ENCODE measurements at regions of chr1 and their contacts with region 1.

Region 1: DNA sequence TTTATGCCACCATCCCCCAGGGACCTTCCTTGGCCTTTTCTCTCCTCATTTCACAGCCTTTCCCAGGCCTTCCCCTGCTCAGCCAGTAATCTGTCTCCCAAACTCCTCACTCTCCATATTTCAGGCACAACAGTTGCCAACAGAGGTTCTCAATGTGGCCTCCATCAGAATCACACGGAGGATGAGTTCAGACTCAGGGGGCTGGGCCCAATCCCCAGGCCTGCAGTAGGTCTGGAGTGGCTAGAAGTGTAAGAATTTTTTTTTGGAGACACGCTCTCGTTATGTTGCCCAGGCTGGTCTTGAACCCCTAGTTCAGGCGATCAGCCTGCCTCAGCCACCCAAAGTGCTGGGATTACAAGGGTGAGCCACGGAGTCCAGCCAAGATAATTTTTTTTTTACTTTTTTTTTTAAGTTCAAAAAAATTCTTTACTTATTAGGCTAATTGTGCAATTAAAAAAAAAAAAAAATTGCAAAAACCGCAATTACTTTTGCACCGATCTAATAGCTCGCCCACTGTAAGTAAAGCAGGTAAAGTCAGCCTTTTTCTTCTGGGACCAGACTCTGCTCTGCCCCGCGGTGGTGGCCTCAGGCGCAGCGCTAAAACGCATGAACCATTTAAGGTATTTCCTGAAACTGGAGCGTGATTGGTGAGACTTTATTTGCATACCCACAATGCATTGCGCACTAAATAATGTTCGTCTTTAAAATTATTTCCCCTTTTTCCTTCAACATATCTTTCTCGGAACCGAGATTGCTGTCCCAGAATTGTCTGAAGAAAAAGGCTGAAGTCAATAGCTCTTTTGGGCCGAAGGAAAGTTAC is 18.7 kb downstream of the KIAA2013 start:
- DNase-seq: peak; percentile 87 to 97
- H3K4me3 ChIP-seq: peak overlapping the region in 1 of 2 donors; percentile 69
- H3K27ac ChIP-seq: peak overlapping the region; percentile 85 to 92
- H3K4me1 ChIP-seq: no peaks in the 10 kb centered on the region
- H3K27me3 ChIP-seq: no peaks in the 10 kb centered on the region
- CTCF ChIP-seq: peak; percentile 88 to 95 (median 94)

Region 2: GRCh38 chr1:11735854-11736745 is 171.4 kb before region 1 on chr1 and contains the start of gene AGTRAP:
- intact Hi-C with region 1: loop called (anchors 5 kb)
- DNase-seq: peak; percentile 81 to 97
- H3K4me3 ChIP-seq: peak within 1 kb of the TSS; percentile 72 to 83
- H3K27ac ChIP-seq: peak within 1 kb of the TSS; percentile 73 to 90
- H3K4me1 ChIP-seq: peaks cover 3 to 18% of the 10 kb centered on the region in 2 donors
- H3K27me3 ChIP-seq: no peaks in the 10 kb centered on the region
- CTCF ChIP-seq: no peak
- total RNA-seq, gene AGTRAP: 95.6 TPM

Region 3: DNA sequence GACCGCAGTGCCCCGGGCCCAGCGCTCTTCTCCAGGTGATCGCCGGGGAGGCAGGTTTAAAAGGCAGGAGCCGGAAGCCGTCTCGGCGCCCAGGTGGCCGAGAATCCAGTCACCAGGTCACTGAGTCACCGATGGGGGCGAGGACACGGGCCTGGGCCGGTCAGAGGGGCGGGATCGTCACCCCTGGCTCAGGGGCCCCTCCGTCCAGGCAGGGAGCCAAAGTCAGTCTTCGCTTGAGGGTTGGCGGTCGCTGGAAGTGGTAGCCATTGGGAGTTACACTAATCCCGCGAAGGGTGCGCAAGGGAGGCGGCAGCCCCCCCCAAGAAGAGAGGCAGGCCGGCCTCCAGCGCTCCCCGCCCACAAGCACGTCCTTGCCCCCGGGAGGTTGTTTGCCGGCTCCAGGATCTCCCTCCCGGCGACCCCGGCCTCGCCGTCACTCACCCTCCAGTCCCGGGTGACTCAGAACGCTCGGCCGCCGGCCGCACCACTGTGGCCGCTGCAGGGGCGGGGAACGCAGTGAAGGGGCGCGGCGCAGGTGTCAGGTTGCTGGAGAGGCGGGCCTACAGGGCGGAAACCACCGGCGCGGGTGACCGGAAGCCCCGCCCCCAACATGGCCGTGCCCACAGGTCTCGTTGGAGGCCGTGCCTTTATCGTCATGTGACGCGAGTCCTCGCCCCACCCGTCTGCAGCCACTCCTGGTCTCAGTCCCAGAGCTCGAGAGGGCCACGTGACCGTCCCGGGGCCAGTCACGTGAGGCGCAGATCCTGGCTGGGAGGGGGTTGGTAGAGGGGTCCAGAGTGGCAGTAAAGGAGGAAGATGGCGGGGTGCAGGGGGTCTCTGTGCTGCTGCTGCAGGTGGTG is 101.8 kb before region 1 on chr1 and contains the starts of genes CLCN6 and MTHFR:
- intact Hi-C with region 1: loop called (anchors 1 kb)
- DNase-seq: peak; percentile 98 to 99
- H3K4me3 ChIP-seq: peak within 1 kb of the TSS; percentile 85
- H3K27ac ChIP-seq: peak within 1 kb of the TSS; percentile 97 to 99
- H3K4me1 ChIP-seq: peaks cover 11 to 26% of the 10 kb centered on the region in 2 donors
- H3K27me3 ChIP-seq: no peaks in the 10 kb centered on the region
- CTCF ChIP-seq: no peak
- total RNA-seq, gene CLCN6: 18.6 TPM
- total RNA-seq, gene MTHFR: 48.4 TPM

Region 4: GRCh38 chr1:11925938-11926292 is 18.4 kb after region 1 on chr1:
- intact Hi-C with region 1: loop called (anchors 1 kb)
- DNase-seq: no peak
- H3K4me3 ChIP-seq: peak overlapping the region; percentile 69 to 81
- H3K27ac ChIP-seq: peak overlapping the region in 1 of 2 donors; percentile 37
- H3K4me1 ChIP-seq: peaks cover 21 to 44% of the 10 kb centered on the region in 2 donors
- H3K27me3 ChIP-seq: no peaks in the 10 kb centered on the region
- CTCF ChIP-seq: no peak

Region 5: GRCh38 chr1:11979851-11980675 is 72.6 kb after region 1 on chr1 and contains the start of gene MFN2:
- intact Hi-C with region 1: loop called (anchors 1 kb)
- DNase-seq: peak; percentile 87 to 97
- H3K4me3 ChIP-seq: peak within 1 kb of the TSS; percentile 91 to 92
- H3K27ac ChIP-seq: peak within 1 kb of the TSS; percentile 89 to 95
- H3K4me1 ChIP-seq: peaks cover 0 to 11% of the 10 kb centered on the region in 2 donors
- H3K27me3 ChIP-seq: no peaks in the 10 kb centered on the region
- CTCF ChIP-seq: no peak
- total RNA-seq, gene MFN2: 85.6 TPM

Region 6: GRCh38 chr1:11990303-11991032 is 83.0 kb after region 1 on chr1:
- intact Hi-C with region 1: no loop called
- DNase-seq: no peak
- H3K4me3 ChIP-seq: no peak overlapping the region
- H3K27ac ChIP-seq: no peak overlapping the region
- H3K4me1 ChIP-seq: no peaks in the 10 kb centered on the region
- H3K27me3 ChIP-seq: no peaks in the 10 kb centered on the region
- CTCF ChIP-seq: no peak